Activated B cell treated with CpG ODN at 0.5 μM for 24 hours (primary cell): ENCODE measurements at regions of chr1 and their contacts with region 1.

Region 1: GRCh38 chr1:42924082-42924850 is 34.4 kb downstream of the SLC2A1 start:
- DNase-seq: peak; percentile 95
- ATAC-seq: peak; percentile 87
- H3K4me3 Mint-ChIP-seq: peak overlapping the region; percentile 91
- H3K27ac Mint-ChIP-seq: peak overlapping the region; percentile 92
- H3K4me1 Mint-ChIP-seq: peaks cover 41% of the 10 kb centered on the region
- H3K27me3 Mint-ChIP-seq: no peaks in the 10 kb centered on the region
- CTCF ChIP-seq: no peak

Region 2: GRCh38 chr1:42479599-42479998 is 444.7 kb before region 1 on chr1:
- CTCF ChIA-PET with region 1: no interaction called
- POLR2A ChIA-PET with region 1: no interaction called
- intact Hi-C with region 1: no loop called
- DNase-seq: no peak
- ATAC-seq: no peak
- H3K4me3 Mint-ChIP-seq: no peak overlapping the region
- H3K27ac Mint-ChIP-seq: no peak overlapping the region
- H3K4me1 Mint-ChIP-seq: no peaks in the 10 kb centered on the region
- H3K27me3 Mint-ChIP-seq: no peaks in the 10 kb centered on the region
- CTCF ChIP-seq: no peak

Region 3: DNA sequence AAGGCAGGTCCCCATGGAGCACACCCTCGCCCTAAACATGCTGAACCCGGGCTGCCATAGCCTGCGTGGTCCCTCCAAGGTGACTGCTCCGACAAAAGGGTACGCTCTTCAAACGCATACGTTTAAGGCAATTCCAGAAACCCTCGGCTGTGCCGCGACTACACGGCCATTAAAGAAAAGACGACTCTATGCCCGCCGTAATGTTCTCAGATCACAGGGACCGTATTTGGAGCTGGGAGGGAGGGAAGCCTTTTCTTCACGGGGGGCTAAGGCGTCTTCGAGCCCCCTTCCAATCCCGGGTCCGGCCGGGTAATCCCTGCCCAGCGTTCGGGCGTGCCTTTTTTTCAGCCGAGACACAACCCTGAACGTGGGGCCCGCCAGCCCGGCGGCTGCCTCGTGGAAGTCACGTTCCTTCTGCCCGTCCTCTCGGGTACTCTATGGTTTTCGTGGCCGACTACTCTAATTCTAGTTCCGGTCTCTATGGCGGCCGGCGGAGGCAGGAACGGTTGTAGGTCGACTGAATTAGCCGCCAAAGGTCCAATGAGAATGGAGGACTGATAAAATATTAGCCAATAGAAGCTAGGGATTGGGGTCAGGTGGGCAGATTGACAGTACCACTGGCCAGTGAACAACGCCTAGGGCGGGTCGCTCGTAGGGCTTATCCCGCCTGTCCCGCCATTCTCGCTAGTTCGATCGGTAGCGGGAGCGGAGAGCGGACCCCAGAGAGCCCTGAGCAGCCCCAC is 242.4 kb before region 1 on chr1 and contains the start of gene YBX1:
- CTCF ChIA-PET with region 1: no interaction called
- POLR2A ChIA-PET with region 1: interaction called, 4 read pairs
- intact Hi-C with region 1: loop called (anchors 5 kb)
- DNase-seq: peak; percentile 88
- ATAC-seq: peak; percentile 88
- H3K4me3 Mint-ChIP-seq: peak within 1 kb of the TSS; percentile 97
- H3K27ac Mint-ChIP-seq: peak within 1 kb of the TSS; percentile 97
- H3K4me1 Mint-ChIP-seq: peaks cover 57% of the 10 kb centered on the region
- H3K27me3 Mint-ChIP-seq: no peaks in the 10 kb centered on the region
- CTCF ChIP-seq: no peak
- total RNA-seq, gene YBX1: 609 and 693 TPM in 2 replicates

Region 4: DNA sequence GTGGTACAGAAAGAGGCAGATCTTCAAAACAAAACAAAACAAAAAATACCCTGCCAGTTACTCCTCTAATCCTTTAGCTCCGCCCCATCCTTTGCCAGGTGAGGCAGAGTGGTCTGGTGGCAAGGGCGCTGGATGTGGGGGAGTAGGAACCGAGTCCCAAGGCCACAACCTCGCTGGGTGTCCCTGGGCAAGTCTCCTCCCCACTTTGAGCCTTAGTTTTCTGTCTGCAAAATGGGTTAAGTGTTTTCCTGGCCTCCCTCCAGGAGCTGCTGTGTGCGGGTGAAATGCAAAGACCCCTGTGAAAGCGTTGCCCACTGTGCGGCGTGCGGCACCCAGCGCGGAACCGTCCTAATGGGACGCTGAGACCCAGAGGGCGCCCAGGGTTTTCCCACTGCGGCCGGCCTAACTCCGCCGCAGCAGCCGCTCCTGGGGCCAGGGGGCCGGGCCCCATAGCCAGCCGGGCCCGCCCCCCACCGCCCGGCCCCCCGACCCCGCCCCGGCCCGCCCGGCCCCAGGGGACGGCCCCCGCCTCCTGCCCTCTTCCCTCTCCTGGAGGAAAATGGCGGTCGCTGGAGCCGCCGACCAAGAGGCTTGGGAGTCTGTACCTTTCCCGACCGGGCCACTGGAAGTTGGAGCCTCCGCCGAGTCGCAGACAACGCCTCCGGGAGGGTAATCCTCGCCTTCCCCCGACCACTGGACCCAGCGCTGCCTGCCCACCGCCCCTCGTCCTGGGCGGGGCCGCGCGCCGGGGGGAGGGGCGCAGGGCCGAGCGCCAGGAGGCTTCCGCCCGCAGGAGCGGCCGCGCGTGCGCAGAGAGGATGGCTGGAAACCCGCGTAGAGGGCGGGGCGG is 107.5 kb before region 1 on chr1 and contains the starts of genes ERMAP and SVBP:
- CTCF ChIA-PET with region 1: interaction called, 3 read pairs
- POLR2A ChIA-PET with region 1: interaction called, 3 read pairs
- intact Hi-C with region 1: loop called (anchors 5 kb)
- DNase-seq: peak; percentile 97
- ATAC-seq: peak; percentile 88
- H3K4me3 Mint-ChIP-seq: peak within 1 kb of the TSS; percentile 86
- H3K27ac Mint-ChIP-seq: peak within 1 kb of the TSS; percentile 86
- H3K4me1 Mint-ChIP-seq: peaks cover 20% of the 10 kb centered on the region
- H3K27me3 Mint-ChIP-seq: no peaks in the 10 kb centered on the region
- CTCF ChIP-seq: no peak
- total RNA-seq, gene ERMAP: 7.1 and 10.7 TPM in 2 replicates
- total RNA-seq, gene SVBP: 21.5 and 22.4 TPM in 2 replicates

Region 5: DNA sequence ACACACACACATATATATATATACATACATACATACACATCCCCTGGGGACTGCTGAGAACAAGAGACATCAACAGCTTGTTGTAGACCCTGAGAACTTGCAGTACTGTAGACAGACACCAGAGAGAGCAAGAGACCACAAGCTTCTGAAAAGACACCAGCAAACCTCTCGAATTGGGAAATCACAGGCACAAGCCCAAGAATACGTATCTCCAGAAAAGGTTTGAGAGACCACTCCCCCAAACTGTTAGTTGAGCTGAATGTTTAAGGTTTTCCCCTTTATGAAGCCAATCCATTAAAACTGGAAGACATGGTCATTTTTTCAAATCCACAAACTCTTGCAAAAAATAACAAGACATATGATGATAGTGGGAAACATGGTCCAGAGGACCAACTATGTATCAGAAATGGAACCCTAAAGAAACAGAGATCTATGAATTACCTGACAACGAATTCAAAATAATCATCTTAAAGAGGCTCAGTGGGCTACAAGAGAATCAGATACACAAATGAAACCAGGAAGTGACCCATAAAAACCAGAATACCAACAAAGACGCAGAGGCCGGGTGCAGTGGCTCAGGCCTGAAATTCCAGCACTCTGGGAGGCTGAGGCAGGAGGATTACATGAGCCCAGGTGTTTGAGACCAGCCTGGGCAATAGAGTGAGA is 10.7 kb before region 1 on chr1:
- CTCF ChIA-PET with region 1: interaction called, 72 read pairs
- POLR2A ChIA-PET with region 1: interaction called, 10 read pairs
- intact Hi-C with region 1: loop called (anchors 1 kb)
- DNase-seq: no peak
- ATAC-seq: peak; percentile 99
- H3K4me3 Mint-ChIP-seq: no peak overlapping the region
- H3K27ac Mint-ChIP-seq: no peak overlapping the region
- H3K4me1 Mint-ChIP-seq: peaks cover 6% of the 10 kb centered on the region
- H3K27me3 Mint-ChIP-seq: no peaks in the 10 kb centered on the region
- CTCF ChIP-seq: peak; percentile 55

Region 6: DNA sequence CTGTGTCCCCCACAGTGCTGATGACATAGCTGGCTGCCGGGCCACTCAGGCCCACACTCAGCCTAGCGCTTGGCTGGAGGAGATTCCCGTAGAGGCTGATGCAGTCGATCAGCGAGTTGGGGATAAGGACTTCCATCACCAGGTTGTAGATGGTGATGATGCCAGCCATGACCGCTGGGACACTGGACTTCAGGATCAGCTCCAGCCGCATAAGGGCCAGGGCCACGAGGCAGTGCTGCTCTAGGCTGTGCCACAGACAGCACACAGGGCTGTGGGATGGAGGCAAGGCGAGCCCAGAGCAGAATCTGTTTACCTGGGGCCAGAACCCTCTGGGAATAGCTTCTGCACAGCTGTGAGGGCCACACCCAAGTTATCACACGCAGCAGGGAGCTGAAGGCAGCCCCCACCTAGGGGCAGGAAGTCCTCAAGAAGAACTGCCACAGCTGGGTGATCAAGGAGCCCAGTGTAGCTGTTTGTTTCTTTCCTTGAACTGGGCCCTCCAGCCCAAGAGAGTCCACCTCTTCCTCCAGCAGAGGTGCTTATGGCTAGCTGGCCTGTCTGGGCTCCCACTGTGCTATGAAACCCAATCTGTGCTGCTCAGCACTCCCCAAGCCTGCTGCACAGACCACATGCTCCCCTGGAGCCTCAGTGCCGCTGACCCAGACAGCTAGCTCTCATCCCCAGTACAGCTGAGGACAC is 28.2 kb after region 1 on chr1:
- CTCF ChIA-PET with region 1: interaction called, 34 read pairs
- POLR2A ChIA-PET with region 1: interaction called, 442 read pairs
- intact Hi-C with region 1: loop called (anchors 1 kb)
- DNase-seq: peak; percentile 51
- ATAC-seq: peak; percentile 76
- H3K4me3 Mint-ChIP-seq: peak overlapping the region; percentile 70
- H3K27ac Mint-ChIP-seq: peak overlapping the region; percentile 96
- H3K4me1 Mint-ChIP-seq: peaks cover 96% of the 10 kb centered on the region
- H3K27me3 Mint-ChIP-seq: no peaks in the 10 kb centered on the region
- CTCF ChIP-seq: no peak

Region 7: GRCh38 chr1:43067977-43068751 is 143.9 kb after region 1 on chr1:
- CTCF ChIA-PET with region 1: interaction called, 523 read pairs
- POLR2A ChIA-PET with region 1: interaction called, 98 read pairs
- intact Hi-C with region 1: loop called (anchors 1 kb)
- DNase-seq: peak; percentile 36
- ATAC-seq: peak; percentile 55
- H3K4me3 Mint-ChIP-seq: peak overlapping the region; percentile 70
- H3K27ac Mint-ChIP-seq: no peak overlapping the region
- H3K4me1 Mint-ChIP-seq: peaks cover 36% of the 10 kb centered on the region
- H3K27me3 Mint-ChIP-seq: no peaks in the 10 kb centered on the region
- CTCF ChIP-seq: no peak

Region 8: DNA sequence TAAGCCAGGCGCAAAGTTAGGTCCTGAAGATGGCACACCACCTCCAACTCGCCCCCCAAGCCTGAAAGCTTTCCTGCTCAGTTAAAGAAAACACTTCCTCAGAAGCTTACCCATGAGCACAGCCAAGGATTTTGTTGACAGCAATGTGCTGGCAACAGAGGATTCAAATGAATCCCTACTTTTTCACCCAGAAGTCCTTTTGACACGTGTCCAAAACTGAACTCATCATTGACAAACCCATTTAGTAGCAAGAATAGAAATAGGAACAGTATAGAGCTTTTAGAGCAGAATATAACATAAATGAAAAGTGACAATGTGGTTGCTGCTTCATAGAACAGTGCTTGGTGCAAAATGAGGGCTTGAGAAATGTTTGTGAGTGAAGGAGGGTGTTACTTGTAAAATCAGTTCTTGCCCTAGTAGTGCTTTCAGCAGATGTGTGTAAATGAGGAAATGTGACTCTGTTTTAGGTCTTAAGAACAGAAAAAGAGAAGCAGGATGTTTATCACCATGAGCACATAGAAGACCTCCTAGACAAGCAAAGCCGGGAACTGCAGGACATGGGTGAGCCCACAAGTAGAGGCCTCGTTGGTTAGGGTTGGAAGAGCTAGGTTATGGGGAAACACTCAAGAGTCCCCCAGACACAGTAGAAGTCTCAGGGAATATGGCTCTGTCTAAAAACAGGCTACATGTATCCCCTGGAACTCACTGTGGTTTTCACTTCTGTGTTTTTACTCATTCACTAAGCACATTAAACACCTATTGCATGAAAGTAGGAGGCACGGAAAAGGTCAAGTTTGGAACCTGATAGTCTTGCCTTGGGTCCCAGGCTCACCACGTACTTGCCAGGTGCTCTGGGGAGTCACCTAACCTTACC is 296.9 kb after region 1 on chr1:
- CTCF ChIA-PET with region 1: interaction called, 3 read pairs
- POLR2A ChIA-PET with region 1: no interaction called
- intact Hi-C with region 1: loop called (anchors 5 kb)
- DNase-seq: peak; percentile 30
- ATAC-seq: peak; percentile 86
- H3K4me3 Mint-ChIP-seq: peak overlapping the region; percentile 29
- H3K27ac Mint-ChIP-seq: peak overlapping the region; percentile 91
- H3K4me1 Mint-ChIP-seq: peaks cover 33% of the 10 kb centered on the region
- H3K27me3 Mint-ChIP-seq: no peaks in the 10 kb centered on the region
- CTCF ChIP-seq: no peak